Colonic mucosa (tissue), 4 donors: ENCODE measurements at regions of chr14 and their contacts with region 1.

Region 1: GRCh38 chr14:39432179-39432618 is at the start of gene FBXO33:
- DNase-seq: peak; percentile 96
- H3K4me3 ChIP-seq: peak within 1 kb of the TSS; percentile 96
- H3K27ac ChIP-seq: peak within 1 kb of the TSS; percentile 96
- H3K4me1 ChIP-seq: no peaks in the 10 kb centered on the region
- H3K27me3 ChIP-seq: no peaks in the 10 kb centered on the region
- CTCF ChIP-seq: no peak
- total RNA-seq, gene FBXO33: 10.6 to 11.1 TPM

Region 2: DNA sequence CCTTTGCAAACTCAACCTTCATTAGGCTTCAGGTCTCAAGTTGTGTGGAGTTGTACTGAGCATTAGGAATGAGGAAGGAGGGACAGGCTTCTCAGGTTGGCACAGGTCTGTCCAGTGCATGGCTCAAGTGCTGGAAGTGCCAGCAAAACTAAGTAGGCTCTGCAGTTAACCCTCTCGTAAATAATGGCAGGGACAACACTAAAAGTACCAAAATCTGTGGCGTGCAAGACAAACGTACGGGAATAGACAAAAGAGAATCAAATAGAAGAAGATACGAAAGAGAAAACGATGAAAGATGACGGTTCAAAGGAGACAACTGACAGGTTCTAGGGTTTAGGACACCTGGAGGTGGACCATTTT is 262.7 kb before region 1 on chr14:
- intact Hi-C with region 1: loop called (anchors 5 kb)
- DNase-seq: peak; percentile 24
- H3K4me3 ChIP-seq: peak overlapping the region; percentile 58
- H3K27ac ChIP-seq: peak overlapping the region; percentile 93
- H3K4me1 ChIP-seq: peaks cover 13% of the 10 kb centered on the region
- H3K27me3 ChIP-seq: no peaks in the 10 kb centered on the region
- CTCF ChIP-seq: no peak